Prostate gland (tissue), 2 donors: ENCODE measurements at regions of chr7 and their contacts with region 1.

Region 1: GRCh38 chr7:137898839-137899721 is 52.3 kb upstream of the DGKI start:
- DNase-seq: peak; percentile 65
- H3K4me3 ChIP-seq: no peak overlapping the region
- H3K27ac ChIP-seq: no peak overlapping the region
- H3K4me1 ChIP-seq: no peaks in the 10 kb centered on the region
- H3K27me3 ChIP-seq: no peaks in the 10 kb centered on the region
- CTCF ChIP-seq: peak; percentile 76 to 83 (median 80)
- POLR2A ChIP-seq: no peak

Region 2: DNA sequence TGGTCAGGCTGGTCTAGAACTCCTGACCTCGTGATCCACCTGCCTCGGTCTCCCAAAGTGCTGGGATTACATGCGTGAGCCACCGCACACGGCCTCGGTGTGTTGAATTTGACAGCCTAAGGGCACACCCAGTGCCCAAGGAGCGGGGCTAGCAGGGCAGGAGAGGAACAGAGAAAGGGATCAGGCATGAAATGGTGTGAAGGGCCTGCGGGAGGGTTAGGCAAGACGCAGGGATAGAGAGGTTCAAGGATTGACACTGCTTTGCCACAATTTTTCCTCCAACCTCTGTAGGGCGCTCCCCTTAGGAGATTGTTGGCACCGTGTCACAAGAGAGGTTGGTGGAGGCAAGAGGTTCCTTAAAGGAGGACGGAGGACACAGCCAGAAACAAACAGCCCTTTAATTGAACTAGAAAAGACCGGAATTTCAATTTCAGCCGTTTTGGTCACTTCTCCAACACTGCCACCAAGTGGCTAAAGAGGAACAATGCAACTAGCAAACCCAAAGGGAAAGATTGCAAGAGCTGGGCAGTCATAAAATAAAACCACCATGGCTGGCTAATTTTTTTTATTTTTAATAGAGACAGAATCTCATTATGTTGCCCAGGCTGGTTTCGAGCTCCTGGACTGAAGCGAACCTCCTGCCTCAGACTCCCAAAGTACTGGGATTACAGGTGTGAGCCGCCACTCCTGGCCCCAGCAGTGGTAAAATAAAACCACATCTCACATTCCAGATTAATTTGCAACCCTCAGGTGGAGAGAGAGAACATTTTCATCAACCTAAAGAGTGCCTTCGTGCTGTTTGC is 109.7 kb after region 1 on chr7:
- intact Hi-C with region 1: loop called (anchors 1 kb)
- DNase-seq: peak; percentile 49
- H3K4me3 ChIP-seq: no peak overlapping the region
- H3K27ac ChIP-seq: peak overlapping the region in 1 of 2 donors; percentile 73
- H3K4me1 ChIP-seq: no peaks in the 10 kb centered on the region
- H3K27me3 ChIP-seq: no peaks in the 10 kb centered on the region
- CTCF ChIP-seq: peak; percentile 81 to 97 (median 88)
- POLR2A ChIP-seq: no peak